Activated B cell treated with CpG ODN at 0.5 μM for 24 hours (primary cell): ENCODE measurements at regions of chr3 and their contacts with region 1.

Region 1: GRCh38 chr3:170368921-170369320 is 11.4 kb downstream of the SKIL start:
- DNase-seq: no peak
- ATAC-seq: no peak
- H3K4me3 Mint-ChIP-seq: no peak overlapping the region
- H3K27ac Mint-ChIP-seq: peak overlapping the region; percentile 46
- H3K4me1 Mint-ChIP-seq: peaks cover 70% of the 10 kb centered on the region
- H3K27me3 Mint-ChIP-seq: no peaks in the 10 kb centered on the region
- CTCF ChIP-seq: no peak

Region 2: GRCh38 chr3:170221924-170222646 is 146.8 kb before region 1 on chr3 and contains the start of gene PRKCI:
- CTCF ChIA-PET with region 1: no interaction called
- POLR2A ChIA-PET with region 1: no interaction called
- intact Hi-C with region 1: loop called (anchors 5 kb)
- DNase-seq: peak; percentile 64
- ATAC-seq: peak; percentile 94
- H3K4me3 Mint-ChIP-seq: peak within 1 kb of the TSS; percentile 95
- H3K27ac Mint-ChIP-seq: peak within 1 kb of the TSS; percentile 73
- H3K4me1 Mint-ChIP-seq: peaks cover 14% of the 10 kb centered on the region
- H3K27me3 Mint-ChIP-seq: no peaks in the 10 kb centered on the region
- CTCF ChIP-seq: no peak
- total RNA-seq, gene PRKCI: 6.6 and 6.9 TPM in 2 replicates

Region 3: GRCh38 chr3:170330366-170330765 is 38.6 kb before region 1 on chr3:
- CTCF ChIA-PET with region 1: interaction called, 3 read pairs
- POLR2A ChIA-PET with region 1: interaction called, 11 read pairs
- intact Hi-C with region 1: no loop called
- DNase-seq: no peak
- ATAC-seq: peak; percentile 79
- H3K4me3 Mint-ChIP-seq: peak overlapping the region; percentile 32
- H3K27ac Mint-ChIP-seq: peak overlapping the region; percentile 53
- H3K4me1 Mint-ChIP-seq: peaks cover 26% of the 10 kb centered on the region
- H3K27me3 Mint-ChIP-seq: no peaks in the 10 kb centered on the region
- CTCF ChIP-seq: no peak

Region 4: DNA sequence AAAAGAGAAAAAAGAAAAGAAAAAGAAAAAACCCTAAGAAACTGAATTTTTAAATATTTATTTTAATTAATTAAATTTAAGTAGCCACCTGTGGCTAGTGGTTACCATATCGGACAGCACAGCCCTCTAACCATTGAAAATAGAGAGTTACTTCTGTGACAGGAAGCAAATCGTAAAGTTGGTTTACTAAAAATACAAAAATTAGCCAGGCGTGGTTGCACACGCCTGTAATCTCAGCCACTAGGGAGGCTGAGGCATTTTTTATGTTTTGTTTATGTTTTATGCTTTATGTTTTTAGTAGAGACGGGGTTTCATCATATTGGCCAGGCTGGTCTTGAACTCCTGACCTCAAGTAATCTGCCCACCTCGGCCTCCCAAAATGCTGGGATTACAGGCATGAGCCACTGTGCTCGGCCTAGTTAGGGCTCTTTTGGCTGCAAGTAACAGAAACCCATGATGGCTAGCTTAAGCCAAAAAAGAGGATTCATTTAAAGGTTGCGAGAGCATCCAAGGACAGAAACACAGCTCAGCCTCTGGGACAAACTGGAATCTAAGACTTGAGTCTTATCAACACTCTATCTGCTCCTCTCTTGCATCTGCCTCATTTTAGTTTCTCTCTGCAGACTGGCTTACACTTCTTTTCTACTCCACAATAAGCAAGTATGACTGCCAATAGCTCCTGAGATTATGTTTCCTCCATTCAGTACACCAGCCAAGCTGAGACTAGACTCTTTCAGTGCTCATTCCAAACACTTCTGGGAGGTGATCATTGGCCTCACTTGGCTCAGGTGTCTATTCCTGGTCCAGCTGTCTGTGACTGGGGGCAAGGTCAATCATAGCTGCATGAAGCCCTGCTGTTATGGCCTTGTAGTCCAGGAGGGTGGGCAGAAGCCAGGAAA is 18.2 kb before region 1 on chr3:
- CTCF ChIA-PET with region 1: no interaction called
- POLR2A ChIA-PET with region 1: interaction called, 45 read pairs
- intact Hi-C with region 1: loop called (anchors 2 kb)
- DNase-seq: no peak
- ATAC-seq: peak; percentile 38
- H3K4me3 Mint-ChIP-seq: peak overlapping the region; percentile 66
- H3K27ac Mint-ChIP-seq: peak overlapping the region; percentile 80
- H3K4me1 Mint-ChIP-seq: peaks cover 85% of the 10 kb centered on the region
- H3K27me3 Mint-ChIP-seq: no peaks in the 10 kb centered on the region
- CTCF ChIP-seq: no peak

Region 5: DNA sequence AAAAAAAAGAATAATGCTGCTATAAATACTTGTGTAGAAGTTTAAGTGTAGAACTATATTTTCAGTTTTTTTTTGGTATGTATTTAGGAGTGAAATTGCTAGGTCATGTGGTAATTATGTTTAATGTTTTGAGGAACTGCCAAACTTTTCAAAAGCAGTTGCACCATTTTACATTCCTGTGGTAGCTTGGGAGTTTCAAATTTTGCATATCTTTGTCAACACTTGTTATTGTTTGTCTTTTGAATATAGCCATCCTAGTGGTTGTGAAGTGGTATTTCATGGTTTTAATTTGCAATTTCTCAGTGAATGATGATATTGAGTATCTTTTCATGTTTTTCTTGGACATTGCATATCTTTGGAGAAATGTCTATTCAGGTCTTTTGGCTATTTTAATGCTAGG is 19.0 kb after region 1 on chr3:
- CTCF ChIA-PET with region 1: no interaction called
- POLR2A ChIA-PET with region 1: interaction called, 7 read pairs
- intact Hi-C with region 1: loop called (anchors 1 kb)
- DNase-seq: no peak
- ATAC-seq: no peak
- H3K4me3 Mint-ChIP-seq: no peak overlapping the region
- H3K27ac Mint-ChIP-seq: no peak overlapping the region
- H3K4me1 Mint-ChIP-seq: peaks cover 26% of the 10 kb centered on the region
- H3K27me3 Mint-ChIP-seq: no peaks in the 10 kb centered on the region
- CTCF ChIP-seq: no peak

Region 6: GRCh38 chr3:170483485-170484262 is 114.8 kb after region 1 on chr3:
- CTCF ChIA-PET with region 1: no interaction called
- POLR2A ChIA-PET with region 1: no interaction called
- intact Hi-C with region 1: no loop called
- DNase-seq: no peak
- ATAC-seq: no peak
- H3K4me3 Mint-ChIP-seq: no peak overlapping the region
- H3K27ac Mint-ChIP-seq: no peak overlapping the region
- H3K4me1 Mint-ChIP-seq: no peaks in the 10 kb centered on the region
- H3K27me3 Mint-ChIP-seq: peaks cover 29% of the 10 kb centered on the region
- CTCF ChIP-seq: no peak